ENCODE measurements at regions of chr5 and their contacts with region 1.

Region 1: DNA sequence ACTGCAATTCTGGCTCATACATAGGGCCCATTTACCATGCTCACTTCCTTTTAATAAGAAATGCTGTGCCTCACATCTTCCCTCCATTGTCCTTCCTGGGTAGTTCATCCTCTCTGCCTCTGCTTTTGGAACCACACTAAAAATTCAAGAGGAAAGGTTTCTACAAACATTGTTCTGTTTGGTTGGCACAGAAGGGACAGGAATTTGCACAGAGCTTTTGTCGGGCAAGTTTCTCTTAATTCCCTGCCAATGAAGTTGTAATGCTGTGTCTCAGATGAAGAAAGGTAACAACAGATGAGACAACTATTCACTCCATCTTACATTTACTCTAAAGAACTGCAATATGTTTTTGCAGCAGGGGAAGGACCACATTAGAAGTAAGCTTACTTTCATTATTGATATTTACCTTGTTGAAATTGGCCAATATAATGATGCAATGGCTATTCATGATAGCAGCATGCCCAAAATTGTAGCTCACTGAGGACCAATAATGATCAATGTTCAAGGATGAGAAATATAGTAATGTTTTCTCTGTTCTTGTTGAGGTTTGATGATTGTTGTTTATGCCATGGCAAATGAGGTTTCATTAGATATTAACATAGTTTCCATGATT is 82.5 kb upstream of the HMHB1 start:
- DNase-seq: no peak
- H3K4me3 ChIP-seq: no peak overlapping the region
- H3K27ac ChIP-seq: no peak overlapping the region
- H3K4me1 ChIP-seq: no peaks in the 10 kb centered on the region
- H3K27me3 ChIP-seq: no peaks in the 10 kb centered on the region
- CTCF ChIP-seq: no peak

Region 2: GRCh38 chr5:143739741-143740140 is 10.3 kb after region 1 on chr5:
- CTCF ChIA-PET with region 1: no interaction called
- POLR2A ChIA-PET with region 1: interaction called, 12 read pairs
- intact Hi-C with region 1: no loop called
- DNase-seq: no peak
- H3K4me3 ChIP-seq: no peak overlapping the region
- H3K27ac ChIP-seq: no peak overlapping the region
- H3K4me1 ChIP-seq: no peaks in the 10 kb centered on the region
- H3K27me3 ChIP-seq: no peaks in the 10 kb centered on the region
- CTCF ChIP-seq: no peak

Measured in PC-9 (cell line).